ENCODE measurements at regions of chr12 and their contacts with region 1.

Region 1: DNA sequence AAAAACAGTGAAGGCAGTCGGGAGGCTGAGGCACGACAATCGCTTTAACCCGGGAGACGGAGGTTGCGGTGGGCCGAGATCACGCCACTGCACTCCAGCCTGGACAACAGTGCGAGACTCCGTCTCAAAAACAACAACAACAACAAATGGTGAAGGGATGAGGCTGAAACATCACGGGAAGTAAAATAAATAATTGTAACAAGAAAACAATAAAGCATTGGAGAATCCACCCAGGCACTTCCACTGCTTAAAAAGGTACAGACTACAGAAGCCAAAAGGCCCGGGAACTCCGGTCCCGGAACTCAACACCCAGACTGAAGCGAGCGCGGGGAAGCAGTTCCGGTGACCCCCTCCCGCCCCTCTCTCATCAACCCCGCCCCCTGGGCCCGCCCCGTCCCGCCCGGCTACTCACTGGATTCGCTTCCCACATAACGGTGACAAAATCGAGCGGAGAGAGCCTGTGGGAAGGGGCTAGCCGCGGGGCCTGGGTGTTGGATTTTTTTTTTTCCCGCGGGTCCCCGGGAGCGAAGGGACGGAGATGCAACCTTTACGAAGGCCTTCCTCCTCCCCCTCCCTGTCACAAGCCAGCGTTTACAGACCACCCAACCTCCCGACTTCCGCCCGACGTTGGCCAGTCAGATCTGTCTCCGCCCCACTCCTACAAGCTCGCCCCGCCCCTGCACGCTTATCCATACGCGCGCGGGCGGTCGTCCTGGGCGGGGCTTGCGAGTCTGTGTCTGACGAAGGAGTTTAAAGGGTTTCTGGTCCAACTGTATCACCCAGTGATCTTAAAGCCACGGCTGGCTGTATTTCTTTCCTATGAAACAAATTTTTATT is at the start of gene PARP11:
- DNase-seq: peak; percentile 99
- ATAC-seq: peak; percentile 93
- H3K4me3 Mint-ChIP-seq: peak within 1 kb of the TSS; percentile 96
- H3K27ac Mint-ChIP-seq: peak within 1 kb of the TSS; percentile 98
- H3K4me1 Mint-ChIP-seq: peaks cover 46% of the 10 kb centered on the region
- H3K27me3 Mint-ChIP-seq: no peaks in the 10 kb centered on the region
- total RNA-seq, gene PARP11: 20.9 to 23.0 TPM

Region 2: GRCh38 chr12:3299929-3300832 is 572.8 kb before region 1 on chr12:
- CTCF ChIA-PET with region 1: interaction called, 3 read pairs
- POLR2A ChIA-PET with region 1: no interaction called
- intact Hi-C with region 1: loop called in 1 of 2 experiments (anchors 2 kb)
- DNase-seq: peak; percentile 93
- ATAC-seq: peak; percentile 85
- H3K4me3 Mint-ChIP-seq: peak overlapping the region; percentile 54
- H3K27ac Mint-ChIP-seq: peak overlapping the region; percentile 82
- H3K4me1 Mint-ChIP-seq: peaks cover 10% of the 10 kb centered on the region
- H3K27me3 Mint-ChIP-seq: peaks cover 7% of the 10 kb centered on the region

Region 3: GRCh38 chr12:3496957-3497356 is 376.1 kb before region 1 on chr12:
- CTCF ChIA-PET with region 1: no interaction called
- POLR2A ChIA-PET with region 1: no interaction called
- intact Hi-C with region 1: no loop called
- DNase-seq: peak; percentile 14
- ATAC-seq: no peak
- H3K4me3 Mint-ChIP-seq: no peak overlapping the region
- H3K27ac Mint-ChIP-seq: no peak overlapping the region
- H3K4me1 Mint-ChIP-seq: peaks cover 5% of the 10 kb centered on the region
- H3K27me3 Mint-ChIP-seq: peaks cover 41% of the 10 kb centered on the region

Region 4: DNA sequence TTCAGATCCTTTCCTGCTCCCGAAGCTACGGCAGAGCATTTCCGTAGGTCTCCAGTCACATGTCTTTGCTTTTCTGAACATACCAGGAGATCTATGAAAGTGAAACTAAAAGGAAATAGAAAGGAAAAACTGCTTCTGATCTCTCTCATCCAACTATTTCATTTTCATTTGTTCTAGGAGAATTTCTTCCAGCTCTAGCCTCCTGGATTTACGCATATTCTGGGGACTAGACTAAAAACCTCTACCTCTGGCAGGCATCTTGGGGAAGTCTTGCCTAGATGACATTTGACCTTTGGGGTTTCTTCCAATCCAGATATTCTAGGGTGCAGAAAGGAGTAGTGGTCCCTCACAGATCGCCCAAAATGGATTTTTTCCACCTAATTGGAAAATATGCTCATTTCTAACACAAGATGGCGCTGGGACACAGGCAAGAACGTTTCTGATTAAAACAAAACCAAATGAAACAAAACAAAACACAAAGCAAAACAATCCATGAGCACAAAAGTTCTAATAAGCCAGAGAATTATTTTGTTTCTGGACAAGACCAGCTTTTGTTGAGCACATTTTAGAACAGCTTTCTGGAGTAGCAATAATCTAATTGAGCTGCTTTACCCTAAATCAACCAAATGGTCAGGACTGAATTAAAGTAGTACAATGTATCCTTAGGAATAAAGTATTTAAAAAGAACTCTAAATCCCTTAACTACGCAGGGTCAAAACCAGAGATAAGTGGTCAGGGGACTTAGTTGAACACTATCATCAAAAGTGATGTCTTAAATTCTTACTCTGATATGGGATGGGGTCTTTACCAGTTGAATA is 12.5 kb after region 1 on chr12:
- CTCF ChIA-PET with region 1: interaction called, 10 read pairs
- POLR2A ChIA-PET with region 1: no interaction called
- intact Hi-C with region 1: no loop called
- DNase-seq: peak; percentile 47
- ATAC-seq: peak; percentile 27
- H3K4me3 Mint-ChIP-seq: no peak overlapping the region
- H3K27ac Mint-ChIP-seq: peak overlapping the region; percentile 58
- H3K4me1 Mint-ChIP-seq: peaks cover 7% of the 10 kb centered on the region
- H3K27me3 Mint-ChIP-seq: no peaks in the 10 kb centered on the region

Region 5: DNA sequence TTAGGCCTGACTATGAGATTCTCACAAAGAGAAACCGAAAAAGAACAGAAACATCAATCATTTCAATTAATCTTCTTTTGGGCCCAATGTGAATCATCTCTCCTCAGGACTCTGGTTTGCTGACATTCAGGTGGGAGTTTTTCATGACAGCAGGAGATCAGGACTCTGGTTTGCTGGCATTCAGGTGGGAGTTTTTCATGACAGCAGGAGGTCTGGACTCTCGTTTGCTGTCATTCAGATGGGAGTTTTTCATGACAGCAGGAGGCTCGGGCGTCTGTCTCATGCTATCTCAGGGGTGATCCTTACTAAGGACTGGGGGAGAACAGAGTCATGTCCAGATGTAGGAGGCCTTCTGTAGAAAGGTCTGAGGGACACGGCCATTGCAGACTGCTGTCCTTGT is 40.3 kb after region 1 on chr12:
- CTCF ChIA-PET with region 1: no interaction called
- POLR2A ChIA-PET with region 1: no interaction called
- intact Hi-C with region 1: no loop called
- DNase-seq: peak; percentile 37
- ATAC-seq: peak; percentile 81
- H3K4me3 Mint-ChIP-seq: no peak overlapping the region
- H3K27ac Mint-ChIP-seq: peak overlapping the region; percentile 20
- H3K4me1 Mint-ChIP-seq: peaks cover 23% of the 10 kb centered on the region
- H3K27me3 Mint-ChIP-seq: no peaks in the 10 kb centered on the region

Region 6: DNA sequence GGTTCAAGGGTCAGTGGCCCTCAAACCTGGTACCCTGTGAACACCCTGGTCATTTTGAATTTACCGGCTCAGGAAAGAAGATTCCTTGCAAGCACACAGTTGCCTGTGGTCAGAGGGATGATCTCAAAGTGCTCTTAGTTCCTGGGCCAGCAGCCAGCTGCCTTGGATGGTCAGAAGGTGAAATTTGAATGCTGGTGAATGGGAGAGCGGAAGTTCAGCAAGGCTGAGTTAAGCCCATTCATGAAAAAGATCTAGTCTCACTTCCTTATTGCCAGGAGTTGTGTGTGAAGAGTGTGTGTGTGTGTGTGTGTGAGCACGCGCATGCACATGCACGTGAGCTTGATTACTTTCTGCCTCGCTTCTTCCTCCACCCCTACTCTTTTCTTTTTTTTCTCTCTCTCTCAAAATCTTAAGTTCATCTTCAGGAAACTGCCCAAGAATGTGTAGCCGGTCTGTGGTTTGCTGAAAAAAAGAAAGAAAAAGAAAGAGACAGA is 245.0 kb after region 1 on chr12:
- CTCF ChIA-PET with region 1: no interaction called
- POLR2A ChIA-PET with region 1: no interaction called
- intact Hi-C with region 1: loop called in 1 of 2 experiments (anchors 5 kb)
- DNase-seq: no peak
- ATAC-seq: no peak
- H3K4me3 Mint-ChIP-seq: peak overlapping the region; percentile 38
- H3K27ac Mint-ChIP-seq: peak overlapping the region; percentile 86
- H3K4me1 Mint-ChIP-seq: peaks cover 63% of the 10 kb centered on the region
- H3K27me3 Mint-ChIP-seq: peaks cover 3% of the 10 kb centered on the region

Region 7: GRCh38 chr12:4269279-4269991 is 396.4 kb after region 1 on chr12:
- CTCF ChIA-PET with region 1: no interaction called
- POLR2A ChIA-PET with region 1: interaction called, 5 read pairs
- intact Hi-C with region 1: loop called (anchors 1 to 2 kb)
- DNase-seq: peak; percentile 97
- ATAC-seq: peak; percentile 14
- H3K4me3 Mint-ChIP-seq: peak overlapping the region; percentile 95
- H3K27ac Mint-ChIP-seq: peak overlapping the region; percentile 100
- H3K4me1 Mint-ChIP-seq: peaks cover 23% of the 10 kb centered on the region
- H3K27me3 Mint-ChIP-seq: no peaks in the 10 kb centered on the region

Region 8: DNA sequence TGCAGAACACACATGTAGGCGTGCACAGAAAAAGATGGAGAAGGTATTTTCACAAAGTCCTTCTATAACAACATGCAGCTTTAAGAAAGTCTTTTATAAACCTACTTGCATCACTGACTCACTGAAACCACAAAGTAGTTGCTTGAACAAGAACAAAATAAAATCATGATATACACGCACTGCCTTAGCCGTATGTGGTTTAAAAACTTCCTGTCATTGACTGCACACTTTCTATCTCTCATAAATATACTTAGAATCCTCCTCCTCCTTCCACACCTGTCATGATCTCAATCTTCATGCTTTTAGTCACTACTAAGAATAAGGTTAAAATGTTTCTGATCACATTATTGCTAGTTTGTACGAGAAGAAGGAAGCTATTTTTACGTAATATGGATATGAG is 633.9 kb after region 1 on chr12:
- CTCF ChIA-PET with region 1: no interaction called
- POLR2A ChIA-PET with region 1: interaction called, 4 read pairs
- intact Hi-C with region 1: loop called (anchors 1 to 10 kb)
- DNase-seq: peak; percentile 21
- ATAC-seq: peak; percentile 99
- H3K4me3 Mint-ChIP-seq: peak overlapping the region; percentile 41
- H3K27ac Mint-ChIP-seq: peak overlapping the region; percentile 69
- H3K4me1 Mint-ChIP-seq: peaks cover 29% of the 10 kb centered on the region
- H3K27me3 Mint-ChIP-seq: no peaks in the 10 kb centered on the region

Region 9: DNA sequence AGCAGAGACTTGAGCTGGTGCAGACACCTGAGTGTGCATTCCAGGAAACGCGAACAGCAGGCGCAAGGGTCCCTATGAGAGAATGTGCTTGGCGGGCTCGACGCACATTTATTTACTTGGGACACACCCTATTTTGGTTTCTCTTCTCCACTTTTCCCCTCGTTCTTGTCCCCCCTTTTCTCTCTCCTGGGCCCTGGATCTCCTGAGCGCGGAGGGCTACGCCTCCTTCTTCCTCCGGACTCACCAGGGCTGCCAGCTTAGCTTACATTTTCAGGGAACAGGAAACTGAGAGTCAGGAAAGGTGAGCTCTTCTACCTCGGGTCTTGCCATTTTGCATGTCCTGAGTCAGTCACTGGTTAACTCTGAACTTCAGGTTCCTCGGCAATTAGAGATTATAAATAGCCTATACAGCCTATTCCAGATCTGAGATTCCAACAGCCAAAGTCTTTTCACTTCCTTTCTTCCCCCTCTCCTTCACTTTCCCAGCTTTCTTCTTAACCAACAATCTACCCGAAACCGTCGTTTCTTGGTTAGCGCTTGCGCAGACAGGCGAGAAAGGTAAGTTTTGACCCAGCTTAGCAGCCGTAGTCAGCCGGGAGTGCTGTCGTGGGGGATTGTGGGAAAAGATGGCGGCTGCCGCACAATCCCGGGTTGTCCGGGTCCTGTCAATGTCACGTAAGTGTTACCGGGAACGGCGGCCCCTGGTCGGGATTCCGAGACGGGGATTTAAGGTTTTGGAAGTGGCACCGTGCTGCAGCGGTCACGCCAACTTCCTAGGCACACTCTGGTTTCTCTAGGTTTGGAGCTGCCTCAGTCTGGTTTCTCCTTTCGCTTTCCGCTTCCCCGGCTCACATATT is 775.7 kb after region 1 on chr12 and contains the starts of genes AKAP3 and NDUFA9:
- CTCF ChIA-PET with region 1: no interaction called
- POLR2A ChIA-PET with region 1: no interaction called
- intact Hi-C with region 1: loop called in 1 of 2 experiments (anchors 2 kb)
- DNase-seq: peak; percentile 90
- ATAC-seq: peak; percentile 95
- H3K4me3 Mint-ChIP-seq: peak within 1 kb of the TSS; percentile 98
- H3K27ac Mint-ChIP-seq: peak within 1 kb of the TSS; percentile 91
- H3K4me1 Mint-ChIP-seq: peaks cover 48% of the 10 kb centered on the region
- H3K27me3 Mint-ChIP-seq: no peaks in the 10 kb centered on the region
- total RNA-seq, gene AKAP3: 1.3 to 2.8 TPM
- total RNA-seq, gene NDUFA9: 93.3 to 132 TPM

Measured in activated CD4-positive, alpha-beta T cell treated with anti-CD3 and anti-CD28 coated beads for 36 hours (primary cell).